PC-3 (cell line): ENCODE measurements at regions of chr11 and their contacts with region 1.

Region 1: GRCh38 chr11:17547051-17547577 is at the start of gene OTOG:
- DNase-seq: peak; percentile 10
- ATAC-seq: no peak
- H3K4me3 ChIP-seq: no peak within 1 kb of the TSS
- H3K27ac ChIP-seq: no peak within 1 kb of the TSS
- H3K4me1 ChIP-seq: no peaks in the 10 kb centered on the region
- H3K27me3 ChIP-seq: peaks cover 7% of the 10 kb centered on the region; the same call in 1 of the 2 replicates
- CTCF ChIP-seq: no peak
- total RNA-seq, gene OTOG: not detected in 2 replicates

Region 2: GRCh38 chr11:17354601-17354991 is 192.5 kb before region 1 on chr11:
- CTCF ChIA-PET with region 1: no interaction called
- POLR2A ChIA-PET with region 1: interaction called, 16 read pairs
- intact Hi-C with region 1: no loop called
- DNase-seq: peak; percentile 73
- ATAC-seq: peak; percentile 14; the same call in 1 of the 2 replicates
- H3K4me3 ChIP-seq: peak overlapping the region; percentile 69
- H3K27ac ChIP-seq: no peak overlapping the region
- H3K4me1 ChIP-seq: peaks cover 5% of the 10 kb centered on the region; the same call in 1 of the 2 replicates
- H3K27me3 ChIP-seq: no peaks in the 10 kb centered on the region
- CTCF ChIP-seq: peak; percentile 75

Region 3: DNA sequence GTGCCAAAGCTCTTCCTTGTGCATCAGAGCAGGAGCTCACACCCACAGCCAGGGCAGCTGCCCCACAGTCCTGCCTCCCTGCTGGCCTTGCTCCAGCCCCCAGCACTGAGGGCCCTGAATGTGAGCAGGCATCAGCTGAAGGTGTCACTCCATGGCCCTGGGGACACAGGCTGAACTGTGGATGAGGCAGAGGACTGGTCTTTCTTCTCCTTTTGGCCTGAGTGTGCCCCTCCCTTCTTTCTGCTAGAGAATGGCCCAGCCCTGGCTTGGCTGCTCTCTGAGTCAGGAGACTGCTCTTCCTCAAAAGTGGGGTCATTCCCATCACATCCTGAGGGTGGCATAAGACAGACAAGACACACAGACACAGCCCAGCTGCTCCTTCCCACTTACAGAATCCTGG is 16.1 kb after region 1 on chr11:
- CTCF ChIA-PET with region 1: no interaction called
- POLR2A ChIA-PET with region 1: no interaction called
- intact Hi-C with region 1: no loop called
- DNase-seq: peak; percentile 21
- ATAC-seq: peak; percentile 31; the same call in 1 of the 2 replicates
- H3K4me3 ChIP-seq: no peak overlapping the region
- H3K27ac ChIP-seq: no peak overlapping the region
- H3K4me1 ChIP-seq: no peaks in the 10 kb centered on the region
- H3K27me3 ChIP-seq: peaks cover 17% of the 10 kb centered on the region; the same call in 1 of the 2 replicates
- CTCF ChIP-seq: peak; percentile 13; the same call in 1 of the 2 replicates

Region 4: DNA sequence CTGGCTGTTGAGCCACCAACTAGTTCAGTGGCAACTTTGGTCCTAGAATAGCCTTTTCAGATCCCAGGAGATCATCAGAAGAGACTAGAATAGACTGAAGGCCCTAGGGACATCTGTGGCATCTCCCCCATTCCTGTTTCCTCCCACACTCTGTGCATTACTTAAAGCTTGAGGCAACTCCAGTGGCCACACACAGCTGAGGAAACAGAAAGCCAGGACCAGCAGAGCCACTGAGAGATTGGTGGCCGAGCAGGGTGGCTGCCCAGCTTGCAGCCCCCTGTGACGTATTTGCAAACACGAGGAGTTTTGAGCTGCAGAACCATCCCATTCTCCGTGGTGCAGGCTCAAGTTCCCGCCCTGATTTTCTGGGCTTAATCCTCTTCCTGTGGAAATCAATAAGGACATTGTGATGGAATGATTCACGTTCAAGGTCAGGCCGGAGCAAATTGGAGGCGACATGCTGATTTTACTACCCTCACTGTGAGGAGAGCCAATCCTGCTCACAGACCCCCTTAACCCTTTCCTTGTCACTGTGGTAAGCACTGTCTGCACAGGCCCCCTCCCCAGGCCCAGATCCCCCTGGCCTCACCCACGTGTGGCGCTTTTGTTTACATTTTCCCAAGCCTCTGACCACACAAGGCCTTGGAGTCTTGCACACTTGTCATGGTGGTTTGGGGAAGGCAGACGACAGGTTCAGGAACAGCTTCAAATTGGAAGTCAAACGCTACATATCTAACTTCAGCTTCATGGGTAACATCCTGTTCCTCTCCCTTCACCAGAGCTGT is 103.2 kb after region 1 on chr11:
- CTCF ChIA-PET with region 1: no interaction called
- POLR2A ChIA-PET with region 1: no interaction called
- intact Hi-C with region 1: no loop called
- DNase-seq: peak; percentile 48
- ATAC-seq: peak; percentile 85
- H3K4me3 ChIP-seq: no peak overlapping the region
- H3K27ac ChIP-seq: no peak overlapping the region
- H3K4me1 ChIP-seq: peaks cover 11% of the 10 kb centered on the region; the same call in 1 of the 2 replicates
- H3K27me3 ChIP-seq: peaks cover 4% of the 10 kb centered on the region; the same call in 1 of the 2 replicates
- CTCF ChIP-seq: no peak